Right lobe of liver (tissue), 6 donors: ENCODE measurements at regions of chr14 and their contacts with region 1.

Region 1: GRCh38 chr14:95307402-95308062 is 12.2 kb downstream of the CLMN start:
- DNase-seq: peak; percentile 88 to 98 (median 96)
- ATAC-seq: peak; percentile 68 to 86 (median 79)
- H3K4me3 ChIP-seq: no peak overlapping the region
- H3K27ac ChIP-seq: peak overlapping the region; percentile 59 to 97 (median 95)
- H3K4me1 ChIP-seq: peaks cover 0 to 81% (median 32%) of the 10 kb centered on the region in 4 donors
- H3K27me3 ChIP-seq: no peaks in the 10 kb centered on the region
- CTCF ChIP-seq: no peak
- POLR2A ChIP-seq: peak; percentile 60

Region 2: GRCh38 chr14:95227279-95227860 is 80.2 kb before region 1 on chr14:
- intact Hi-C with region 1: loop called in 1 of 2 experiments (anchors 10 kb)
- DNase-seq: no peak
- ATAC-seq: no peak
- H3K4me3 ChIP-seq: no peak overlapping the region
- H3K27ac ChIP-seq: peak overlapping the region; percentile 38 to 93 (median 81)
- H3K4me1 ChIP-seq: peaks cover 0 to 49% (median 16%) of the 10 kb centered on the region in 4 donors
- H3K27me3 ChIP-seq: no peaks in the 10 kb centered on the region
- CTCF ChIP-seq: no peak
- POLR2A ChIP-seq: no peak